HEK293 (cell line): ENCODE measurements at regions of chr2 and their contacts with region 1.

Region 1: DNA sequence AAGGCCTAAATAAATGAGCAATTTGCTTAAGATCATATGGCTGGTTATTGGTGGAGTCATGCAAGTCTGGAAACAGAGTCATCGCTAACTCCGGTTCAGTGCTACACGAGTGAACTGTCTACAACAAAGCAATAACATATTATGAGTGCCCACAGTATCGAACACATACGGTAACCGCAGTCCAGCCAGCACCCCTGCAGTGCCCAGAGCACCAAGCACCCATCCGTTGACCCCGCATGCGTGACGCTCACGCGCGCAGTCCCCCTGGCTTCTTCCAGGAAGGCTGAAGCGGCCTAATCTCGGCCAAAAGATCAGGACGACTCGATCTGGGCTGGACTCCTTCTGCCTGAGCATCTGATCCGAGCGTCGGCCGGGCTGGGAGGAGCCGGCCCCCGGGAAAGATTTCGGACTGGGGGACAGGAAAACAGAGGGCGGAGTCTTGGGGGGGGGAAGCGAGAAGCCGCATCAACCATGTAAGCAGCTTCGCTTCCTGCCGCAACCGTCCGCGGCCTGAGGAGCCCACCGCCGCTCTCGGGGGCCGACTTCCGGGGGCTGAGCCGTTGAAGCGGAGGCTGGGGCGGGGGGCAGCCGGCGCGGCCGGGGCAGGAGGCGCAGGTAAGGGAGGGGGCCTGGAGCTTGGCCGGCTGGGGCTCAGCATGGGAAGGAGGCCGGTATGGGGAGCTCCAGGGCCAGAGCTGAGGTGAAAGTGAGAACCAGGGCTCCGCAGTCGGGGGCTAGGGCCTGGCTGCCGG is at the start of gene PIKFYVE:
- H3K4me3 ChIP-seq: peak within 1 kb of the TSS; percentile 82
- H3K27ac ChIP-seq: peak within 1 kb of the TSS; percentile 82
- H3K4me1 ChIP-seq: no peaks in the 10 kb centered on the region; the same call in 1 of the 2 replicates
- CTCF ChIP-seq: 0 out of 2 replicates have a peak, but pooled peaks have one; percentile 24

Region 2: DNA sequence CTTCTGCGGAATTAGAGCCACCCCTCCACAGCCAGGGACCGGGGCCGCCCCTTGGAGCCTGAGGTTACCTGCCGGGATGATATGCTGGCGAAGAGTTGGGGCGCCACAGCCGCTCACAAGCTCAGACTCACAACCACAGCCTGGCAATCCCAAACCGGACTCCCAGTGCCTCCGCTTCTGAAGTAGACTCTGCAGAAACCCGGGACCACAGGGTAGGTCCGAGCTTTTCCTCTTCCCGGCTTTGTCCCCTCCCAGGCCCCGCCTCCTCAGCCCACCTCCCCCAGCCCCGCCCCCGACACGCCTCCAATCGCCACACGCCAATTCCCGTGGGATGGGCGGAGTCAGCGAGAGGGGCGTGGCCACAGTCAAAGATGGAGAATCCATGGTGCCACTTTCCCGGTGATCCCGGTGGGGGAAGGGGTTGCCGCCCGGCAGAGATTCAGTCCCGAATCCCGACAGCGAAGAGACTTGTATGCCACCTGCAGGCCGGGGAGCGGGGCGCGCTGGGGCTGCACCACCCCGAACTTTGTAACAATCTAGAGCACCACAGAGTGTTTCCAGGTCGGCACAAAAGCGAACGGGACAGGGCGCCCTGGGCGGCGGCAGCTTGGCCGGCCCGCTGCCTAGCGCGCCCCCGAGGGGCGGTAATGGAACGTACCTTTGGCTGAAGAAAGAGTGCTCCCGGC is 11.0 kb before region 1 on chr2 and contains the start of gene IDH1:
- CTCF ChIA-PET with region 1: interaction called, 17 read pairs
- POLR2A ChIA-PET with region 1: interaction called, 41 read pairs
- H3K4me3 ChIP-seq: peak within 1 kb of the TSS; percentile 82
- H3K27ac ChIP-seq: peak within 1 kb of the TSS; percentile 83
- H3K4me1 ChIP-seq: 0 out of 2 replicates have a peak, but pooled peaks cover 2% of the 10 kb centered on the region
- CTCF ChIP-seq: peak; percentile 91

Region 3: GRCh38 chr2:208294482-208295024 is 28.6 kb after region 1 on chr2:
- CTCF ChIA-PET with region 1: no interaction called
- POLR2A ChIA-PET with region 1: no interaction called
- H3K4me3 ChIP-seq: no peak overlapping the region
- H3K27ac ChIP-seq: no peak overlapping the region
- H3K4me1 ChIP-seq: no peaks in the 10 kb centered on the region
- CTCF ChIP-seq: no peak

Region 4: GRCh38 chr2:208501206-208501799 is 235.3 kb after region 1 on chr2:
- CTCF ChIA-PET with region 1: no interaction called
- POLR2A ChIA-PET with region 1: no interaction called
- H3K4me3 ChIP-seq: no peak overlapping the region
- H3K27ac ChIP-seq: no peak overlapping the region
- H3K4me1 ChIP-seq: no peaks in the 10 kb centered on the region
- CTCF ChIP-seq: no peak